ENCODE measurements at regions of chr3 and their contacts with region 1.

Region 1: DNA sequence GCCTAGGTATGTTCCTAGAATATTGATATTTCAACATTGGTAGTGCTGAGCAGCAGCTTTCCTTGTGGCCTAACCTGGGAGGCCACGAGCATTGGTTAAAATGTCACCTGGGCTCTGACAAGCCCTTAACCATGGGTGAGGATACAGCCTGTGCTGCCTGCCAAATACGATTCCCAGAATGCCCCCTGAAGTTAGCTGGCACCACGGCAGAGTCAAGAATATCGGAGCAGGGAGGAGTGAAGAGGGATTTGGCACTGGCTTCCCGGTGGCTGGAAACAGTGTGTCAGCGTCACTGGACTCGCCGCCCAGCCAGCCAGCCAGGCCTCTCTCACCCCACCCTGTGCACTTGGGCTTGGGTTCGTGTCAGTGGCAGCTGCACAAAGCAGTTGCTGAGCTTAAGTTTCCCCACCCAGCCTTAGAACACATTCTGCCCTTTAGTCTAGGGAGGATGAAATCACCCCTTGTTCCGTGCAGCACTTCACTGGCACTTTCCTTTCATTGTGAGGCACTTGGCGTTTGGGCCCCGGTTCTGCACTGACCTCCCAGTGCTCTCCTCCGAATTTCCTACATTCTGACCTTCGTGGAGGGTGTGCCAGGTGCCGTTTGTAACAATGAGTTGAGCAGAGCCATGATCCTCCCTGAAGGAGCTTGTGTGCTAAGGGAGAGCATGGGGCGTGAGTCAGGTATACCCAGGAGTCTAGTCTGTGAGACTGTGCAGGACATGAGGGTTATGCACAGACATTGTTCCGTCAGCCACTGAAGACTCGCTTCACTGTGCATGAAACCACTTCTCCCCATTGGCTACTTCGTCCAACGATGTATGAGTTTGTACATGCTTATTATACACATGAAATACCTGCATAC is 152.8 kb upstream of the BHLHE40 start:
- DNase-seq: no peak
- H3K4me3 Mint-ChIP-seq: peak overlapping the region; percentile 70
- H3K27ac Mint-ChIP-seq: peak overlapping the region; percentile 85
- H3K4me1 Mint-ChIP-seq: peaks cover 94% of the 10 kb centered on the region
- H3K27me3 Mint-ChIP-seq: no peaks in the 10 kb centered on the region

Region 2: DNA sequence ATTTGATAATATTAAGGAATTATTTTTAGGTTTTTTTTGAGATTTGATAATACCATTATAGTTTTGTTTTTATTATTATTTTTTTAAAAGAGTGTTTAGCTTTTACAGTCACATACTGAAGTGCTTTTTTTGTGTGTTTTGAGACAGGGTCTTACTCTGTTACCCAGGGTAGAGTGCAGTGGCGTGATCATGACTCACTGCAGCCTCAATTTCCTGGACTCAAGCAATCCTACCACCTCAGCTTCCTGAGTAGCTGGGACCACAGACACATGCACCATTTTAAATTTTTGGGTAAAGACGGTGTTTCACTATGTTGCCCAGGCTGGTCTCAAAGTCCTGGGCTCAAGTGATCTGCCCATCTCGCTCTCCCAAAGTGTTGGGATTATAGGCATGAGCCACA is 432.4 kb before region 1 on chr3:
- CTCF ChIA-PET with region 1: no interaction called
- POLR2A ChIA-PET with region 1: no interaction called
- intact Hi-C with region 1: no loop called
- DNase-seq: peak; percentile 59
- H3K4me3 Mint-ChIP-seq: no peak overlapping the region
- H3K27ac Mint-ChIP-seq: peak overlapping the region; percentile 69
- H3K4me1 Mint-ChIP-seq: peaks cover 37% of the 10 kb centered on the region
- H3K27me3 Mint-ChIP-seq: no peaks in the 10 kb centered on the region

Region 3: DNA sequence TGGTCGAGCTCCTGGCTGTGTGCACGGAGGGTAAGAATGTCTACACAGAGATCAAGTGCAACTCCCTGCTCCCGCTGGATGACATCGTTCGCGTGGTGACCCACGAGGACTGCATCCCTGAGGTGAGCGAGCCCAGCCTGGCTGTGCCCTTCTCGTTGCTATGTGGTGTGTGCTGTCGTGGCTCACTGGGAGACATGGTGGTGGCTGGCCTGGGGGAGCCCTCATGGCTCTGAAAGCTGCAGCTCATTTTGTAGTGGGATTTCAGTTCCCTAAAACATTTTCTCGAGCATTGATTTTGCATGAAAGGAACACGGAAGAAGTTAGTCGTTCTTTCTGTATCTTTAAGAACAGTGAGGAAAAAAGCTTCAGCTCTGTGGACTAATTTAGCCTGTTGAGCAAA is 132.8 kb before region 1 on chr3:
- CTCF ChIA-PET with region 1: no interaction called
- POLR2A ChIA-PET with region 1: no interaction called
- intact Hi-C with region 1: no loop called
- DNase-seq: no peak
- H3K4me3 Mint-ChIP-seq: no peak overlapping the region
- H3K27ac Mint-ChIP-seq: no peak overlapping the region
- H3K4me1 Mint-ChIP-seq: no peaks in the 10 kb centered on the region
- H3K27me3 Mint-ChIP-seq: no peaks in the 10 kb centered on the region

Region 4: DNA sequence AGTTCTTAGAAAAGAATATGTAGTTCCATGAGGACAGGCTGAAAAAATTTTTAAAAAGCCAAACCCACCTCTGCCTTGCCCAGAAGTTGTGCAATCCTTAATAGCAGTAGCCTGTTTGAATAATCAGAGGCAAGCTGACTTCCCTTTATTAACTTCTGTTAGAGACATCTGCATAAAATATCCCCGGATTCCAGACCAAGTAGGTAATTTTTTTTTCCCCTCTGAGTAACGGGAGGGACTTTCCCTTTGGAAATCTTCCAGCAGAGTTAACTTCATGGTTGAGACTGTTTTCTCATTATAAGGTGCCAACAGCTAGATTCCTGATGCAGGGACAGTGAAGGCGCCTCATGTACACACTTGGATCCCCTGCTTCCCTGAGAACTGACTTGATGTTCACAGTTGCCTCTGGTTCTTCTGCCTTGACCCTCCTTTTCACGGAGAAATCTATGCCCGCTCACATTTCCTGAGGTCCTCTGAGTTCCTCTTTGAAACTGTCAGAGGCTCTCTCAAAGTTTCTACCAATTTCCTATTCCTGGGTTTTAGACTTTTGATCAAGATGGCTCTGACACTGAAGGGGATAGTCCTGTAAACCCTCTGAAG is 74.9 kb before region 1 on chr3:
- CTCF ChIA-PET with region 1: no interaction called
- POLR2A ChIA-PET with region 1: interaction called, 8 read pairs
- intact Hi-C with region 1: loop called (anchors 2 kb)
- DNase-seq: no peak
- H3K4me3 Mint-ChIP-seq: no peak overlapping the region
- H3K27ac Mint-ChIP-seq: peak overlapping the region; percentile 71
- H3K4me1 Mint-ChIP-seq: peaks cover 48% of the 10 kb centered on the region
- H3K27me3 Mint-ChIP-seq: no peaks in the 10 kb centered on the region

Region 5: GRCh38 chr3:4845882-4846281 is 19.4 kb after region 1 on chr3:
- CTCF ChIA-PET with region 1: interaction called, 12 read pairs
- POLR2A ChIA-PET with region 1: interaction called, 28 read pairs
- intact Hi-C with region 1: loop called (anchors 1 kb)
- DNase-seq: no peak
- H3K4me3 Mint-ChIP-seq: peak overlapping the region; percentile 14
- H3K27ac Mint-ChIP-seq: peak overlapping the region; percentile 83
- H3K4me1 Mint-ChIP-seq: peaks cover 96% of the 10 kb centered on the region
- H3K27me3 Mint-ChIP-seq: no peaks in the 10 kb centered on the region

Region 6: DNA sequence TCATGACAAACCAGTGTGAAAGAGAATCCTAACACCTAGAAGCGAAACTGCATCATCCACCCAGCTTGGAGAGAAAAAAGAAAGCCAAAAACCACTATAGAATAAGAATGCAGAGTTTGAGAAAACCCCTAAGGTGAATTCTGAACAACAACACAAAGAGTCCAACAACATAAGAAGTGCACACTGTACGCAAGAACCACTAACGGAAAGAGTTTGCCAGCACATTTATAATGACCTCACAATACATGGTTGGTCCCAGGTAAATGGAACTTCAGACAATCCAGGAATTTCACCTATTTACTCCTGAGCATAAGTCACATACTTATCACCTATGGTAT is 24.4 kb after region 1 on chr3:
- CTCF ChIA-PET with region 1: interaction called, 4 read pairs
- POLR2A ChIA-PET with region 1: interaction called, 28 read pairs
- intact Hi-C with region 1: loop called (anchors 1 kb)
- DNase-seq: peak; percentile 43
- H3K4me3 Mint-ChIP-seq: peak overlapping the region; percentile 53
- H3K27ac Mint-ChIP-seq: peak overlapping the region; percentile 88
- H3K4me1 Mint-ChIP-seq: peaks cover 88% of the 10 kb centered on the region
- H3K27me3 Mint-ChIP-seq: no peaks in the 10 kb centered on the region

Region 7: GRCh38 chr3:4888913-4889846 is 62.7 kb after region 1 on chr3:
- CTCF ChIA-PET with region 1: interaction called, 3 read pairs
- POLR2A ChIA-PET with region 1: no interaction called
- intact Hi-C with region 1: loop called (anchors 1 kb)
- DNase-seq: peak; percentile 67
- H3K4me3 Mint-ChIP-seq: no peak overlapping the region
- H3K27ac Mint-ChIP-seq: peak overlapping the region; percentile 90
- H3K4me1 Mint-ChIP-seq: peaks cover 31% of the 10 kb centered on the region
- H3K27me3 Mint-ChIP-seq: no peaks in the 10 kb centered on the region

Region 8: GRCh38 chr3:5330152-5330810 is 503.8 kb after region 1 on chr3:
- CTCF ChIA-PET with region 1: no interaction called
- POLR2A ChIA-PET with region 1: no interaction called
- intact Hi-C with region 1: loop called (anchors 10 kb)
- DNase-seq: peak; percentile 65
- H3K4me3 Mint-ChIP-seq: peak overlapping the region; percentile 36
- H3K27ac Mint-ChIP-seq: peak overlapping the region; percentile 59
- H3K4me1 Mint-ChIP-seq: peaks cover 32% of the 10 kb centered on the region
- H3K27me3 Mint-ChIP-seq: peaks cover 3% of the 10 kb centered on the region